ENCODE measurements at regions of chr6 and their contacts with region 1.

Region 1: GRCh38 chr6:55445648-55446204 is 118.5 kb downstream of the GFRAL start:
- DNase-seq: no peak
- H3K4me3 ChIP-seq: no peak overlapping the region
- H3K27ac ChIP-seq: no peak overlapping the region
- H3K4me1 ChIP-seq: no peaks in the 10 kb centered on the region
- H3K27me3 ChIP-seq: no peaks in the 10 kb centered on the region
- CTCF ChIP-seq: peak in 4 of 5 experiments; percentile 31 to 52 (median 44)
- EP300 ChIP-seq: no peak
- POLR2A ChIP-seq: no peak

Region 2: DNA sequence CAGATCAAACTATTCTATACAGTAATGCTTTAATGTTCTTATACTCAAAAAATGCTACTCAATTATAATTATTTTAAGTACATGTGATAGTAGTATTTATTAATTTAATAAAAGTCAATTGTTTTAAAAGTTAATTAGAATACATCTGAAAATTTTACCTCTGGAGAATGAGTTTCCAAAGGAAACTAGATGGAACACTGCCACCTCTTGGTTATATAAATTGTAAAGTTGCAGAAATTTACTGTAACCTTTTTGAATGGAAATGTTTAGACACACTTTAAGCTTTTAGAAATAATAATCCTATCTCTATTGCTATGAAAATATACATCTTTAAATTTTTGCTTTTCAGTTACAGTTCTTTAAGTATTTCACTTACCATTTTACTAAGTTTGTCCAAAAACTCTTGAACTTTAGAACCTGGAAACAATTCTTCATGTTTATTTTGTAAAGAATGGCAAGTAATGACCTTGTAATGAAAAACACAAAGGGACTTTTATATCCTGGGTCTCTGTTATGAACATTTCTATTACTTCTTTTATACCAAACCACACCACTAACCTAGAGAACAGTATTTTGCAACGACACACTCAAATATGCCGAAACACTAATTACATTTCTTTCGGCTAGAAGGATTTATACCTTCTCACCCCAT is 440.6 kb after region 1 on chr6:
- in situ Hi-C with region 1: loop called in 1 of 4 experiments (anchors 25 kb)
- intact Hi-C with region 1: no loop called
- DNase-seq: no peak
- H3K4me3 ChIP-seq: no peak overlapping the region
- H3K27ac ChIP-seq: no peak overlapping the region
- H3K4me1 ChIP-seq: no peaks in the 10 kb centered on the region
- H3K27me3 ChIP-seq: no peaks in the 10 kb centered on the region
- CTCF ChIP-seq: peak in 4 of 5 experiments; percentile 16 to 33 (median 26)
- EP300 ChIP-seq: no peak
- POLR2A ChIP-seq: no peak

Region 3: GRCh38 chr6:55957961-55958422 is 512.3 kb after region 1 on chr6:
- in situ Hi-C with region 1: no loop called
- intact Hi-C with region 1: loop called (anchors 5 kb)
- DNase-seq: no peak
- H3K4me3 ChIP-seq: no peak overlapping the region
- H3K27ac ChIP-seq: no peak overlapping the region
- H3K4me1 ChIP-seq: peaks cover 0 to 3% (median 0%) of the 10 kb centered on the region in 4 donors
- H3K27me3 ChIP-seq: no peaks in the 10 kb centered on the region
- CTCF ChIP-seq: no peak
- EP300 ChIP-seq: no peak
- POLR2A ChIP-seq: no peak